CD8-positive, alpha-beta memory T cell (primary cell): ENCODE measurements at regions of chr7 and their contacts with region 1.

Region 1: GRCh38 chr7:106041140-106041717 is 70.9 kb downstream of the SYPL1 start:
- DNase-seq: peak in 2 of 5 donors; percentile 10 to 29
- H3K4me3 ChIP-seq: no peak overlapping the region
- H3K4me3 Mint-ChIP-seq: no peak overlapping the region
- H3K27ac ChIP-seq: no peak overlapping the region
- H3K27ac Mint-ChIP-seq: peak overlapping the region in 3 of 8 donors; percentile 6 to 14 (median 8)
- H3K4me1 ChIP-seq: peaks cover 30% of the 10 kb centered on the region
- H3K4me1 Mint-ChIP-seq: peaks cover 15 to 31% (median 30%) of the 10 kb centered on the region in 3 donors
- H3K27me3 ChIP-seq: no peaks in the 10 kb centered on the region
- H3K27me3 Mint-ChIP-seq: peaks cover 2 to 11% of the 10 kb centered on the region in 2 donors

Region 2: DNA sequence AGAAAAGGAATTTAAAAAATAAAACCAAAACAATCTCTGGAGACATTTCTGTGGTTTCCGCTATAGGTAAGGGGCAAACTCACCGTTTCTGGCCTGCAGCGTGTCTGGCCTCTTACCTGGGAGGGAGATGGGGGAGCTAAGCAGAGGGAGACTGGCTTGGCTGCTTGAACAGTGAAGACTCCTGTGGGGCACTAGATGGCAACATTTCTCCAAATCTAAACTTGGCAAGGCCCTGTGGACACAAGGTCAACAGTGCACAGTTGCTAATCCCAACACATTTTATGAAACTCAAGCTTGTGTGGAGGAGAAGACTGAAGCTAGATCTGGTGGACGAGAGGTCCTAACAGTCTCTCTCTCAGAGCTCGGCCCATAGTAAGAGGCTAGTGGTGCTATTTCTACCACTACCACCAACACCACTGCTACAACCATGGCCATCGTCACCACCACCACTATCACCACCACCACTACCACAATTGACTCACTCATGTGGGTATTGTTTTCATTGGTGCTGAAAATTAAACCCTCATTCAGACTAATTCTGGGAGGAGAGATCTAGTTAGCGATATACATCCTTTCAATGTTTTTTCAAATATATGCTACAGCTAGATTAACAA is 106.5 kb before region 1 on chr7:
- CTCF ChIA-PET with region 1: interaction called, 10 read pairs
- POLR2A ChIA-PET with region 1: no interaction called
- DNase-seq: peak in 1 of 5 donors; percentile 5
- H3K4me3 ChIP-seq: no peak overlapping the region
- H3K4me3 Mint-ChIP-seq: no peak overlapping the region
- H3K27ac ChIP-seq: no peak overlapping the region
- H3K27ac Mint-ChIP-seq: peak overlapping the region in 3 of 8 donors; percentile 19 to 52 (median 31)
- H3K4me1 ChIP-seq: no peaks in the 10 kb centered on the region
- H3K4me1 Mint-ChIP-seq: peaks cover 0 to 4% (median 0%) of the 10 kb centered on the region in 3 donors
- H3K27me3 ChIP-seq: no peaks in the 10 kb centered on the region
- H3K27me3 Mint-ChIP-seq: no peaks in the 10 kb centered on the region

Region 3: GRCh38 chr7:106009403-106010226 is 31.6 kb before region 1 on chr7:
- CTCF ChIA-PET with region 1: interaction called, 11 read pairs
- POLR2A ChIA-PET with region 1: no interaction called
- DNase-seq: peak; percentile 63 to 81 (median 71)
- H3K4me3 ChIP-seq: no peak overlapping the region
- H3K4me3 Mint-ChIP-seq: peak overlapping the region in 5 of 7 donors; percentile 13 to 49 (median 30)
- H3K27ac ChIP-seq: no peak overlapping the region
- H3K27ac Mint-ChIP-seq: peak overlapping the region in 6 of 8 donors; percentile 28 to 96 (median 72)
- H3K4me1 ChIP-seq: peaks cover 29% of the 10 kb centered on the region
- H3K4me1 Mint-ChIP-seq: peaks cover 8 to 28% (median 25%) of the 10 kb centered on the region in 3 donors
- H3K27me3 ChIP-seq: no peaks in the 10 kb centered on the region
- H3K27me3 Mint-ChIP-seq: peaks cover 0 to 3% of the 10 kb centered on the region in 2 donors

Region 4: DNA sequence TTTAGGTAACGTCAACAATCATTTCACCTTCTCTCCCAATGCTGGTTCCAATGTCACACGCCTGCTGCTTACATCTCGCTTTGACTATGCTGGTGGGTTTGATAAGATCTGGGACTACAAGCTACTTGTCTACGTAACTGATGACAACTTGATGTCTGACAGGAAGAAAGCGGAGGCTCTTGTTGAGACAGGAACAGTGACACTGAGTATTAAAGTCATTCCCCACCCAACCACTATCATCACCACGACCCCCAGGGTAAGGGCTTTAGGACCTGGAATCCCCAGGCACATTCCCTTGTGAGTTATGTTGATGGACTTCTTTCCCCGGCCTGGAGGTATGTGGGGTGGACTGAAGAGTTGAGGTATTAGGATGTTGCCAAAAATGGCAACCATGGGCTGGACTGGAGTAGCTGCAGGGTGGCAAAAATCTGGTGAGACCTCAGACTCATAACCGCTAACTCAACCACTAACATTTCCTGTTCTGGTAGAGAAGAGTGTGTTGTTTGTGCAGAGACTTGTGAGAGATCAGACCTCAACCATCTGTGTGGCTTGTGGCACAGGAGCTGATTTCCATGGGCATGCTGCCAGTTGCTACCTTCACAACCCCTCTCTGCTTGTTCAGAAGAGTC is 18.9 kb before region 1 on chr7:
- CTCF ChIA-PET with region 1: interaction called, 18 read pairs
- POLR2A ChIA-PET with region 1: interaction called, 5 read pairs
- DNase-seq: peak; percentile 63 to 97 (median 86)
- H3K4me3 ChIP-seq: peak overlapping the region; percentile 36
- H3K4me3 Mint-ChIP-seq: peak overlapping the region; percentile 8 to 85 (median 67)
- H3K27ac ChIP-seq: peak overlapping the region; percentile 56
- H3K27ac Mint-ChIP-seq: peak overlapping the region; percentile 74 to 99 (median 96)
- H3K4me1 ChIP-seq: peaks cover 75% of the 10 kb centered on the region
- H3K4me1 Mint-ChIP-seq: peaks cover 46 to 70% (median 53%) of the 10 kb centered on the region in 3 donors
- H3K27me3 ChIP-seq: no peaks in the 10 kb centered on the region
- H3K27me3 Mint-ChIP-seq: peaks cover 0 to 1% of the 10 kb centered on the region in 2 donors

Region 5: GRCh38 chr7:106187613-106188350 is 146.6 kb after region 1 on chr7:
- CTCF ChIA-PET with region 1: no interaction called
- POLR2A ChIA-PET with region 1: no interaction called
- DNase-seq: no peak
- H3K4me3 ChIP-seq: no peak overlapping the region
- H3K4me3 Mint-ChIP-seq: no peak overlapping the region
- H3K27ac ChIP-seq: no peak overlapping the region
- H3K27ac Mint-ChIP-seq: no peak overlapping the region
- H3K4me1 ChIP-seq: no peaks in the 10 kb centered on the region
- H3K4me1 Mint-ChIP-seq: peaks cover 0 to 10% (median 6%) of the 10 kb centered on the region in 3 donors
- H3K27me3 ChIP-seq: no peaks in the 10 kb centered on the region
- H3K27me3 Mint-ChIP-seq: peaks cover 6 to 42% of the 10 kb centered on the region in 2 donors